HEK293 (cell line): ENCODE measurements at regions of chr9 and their contacts with region 1.

Region 1: DNA sequence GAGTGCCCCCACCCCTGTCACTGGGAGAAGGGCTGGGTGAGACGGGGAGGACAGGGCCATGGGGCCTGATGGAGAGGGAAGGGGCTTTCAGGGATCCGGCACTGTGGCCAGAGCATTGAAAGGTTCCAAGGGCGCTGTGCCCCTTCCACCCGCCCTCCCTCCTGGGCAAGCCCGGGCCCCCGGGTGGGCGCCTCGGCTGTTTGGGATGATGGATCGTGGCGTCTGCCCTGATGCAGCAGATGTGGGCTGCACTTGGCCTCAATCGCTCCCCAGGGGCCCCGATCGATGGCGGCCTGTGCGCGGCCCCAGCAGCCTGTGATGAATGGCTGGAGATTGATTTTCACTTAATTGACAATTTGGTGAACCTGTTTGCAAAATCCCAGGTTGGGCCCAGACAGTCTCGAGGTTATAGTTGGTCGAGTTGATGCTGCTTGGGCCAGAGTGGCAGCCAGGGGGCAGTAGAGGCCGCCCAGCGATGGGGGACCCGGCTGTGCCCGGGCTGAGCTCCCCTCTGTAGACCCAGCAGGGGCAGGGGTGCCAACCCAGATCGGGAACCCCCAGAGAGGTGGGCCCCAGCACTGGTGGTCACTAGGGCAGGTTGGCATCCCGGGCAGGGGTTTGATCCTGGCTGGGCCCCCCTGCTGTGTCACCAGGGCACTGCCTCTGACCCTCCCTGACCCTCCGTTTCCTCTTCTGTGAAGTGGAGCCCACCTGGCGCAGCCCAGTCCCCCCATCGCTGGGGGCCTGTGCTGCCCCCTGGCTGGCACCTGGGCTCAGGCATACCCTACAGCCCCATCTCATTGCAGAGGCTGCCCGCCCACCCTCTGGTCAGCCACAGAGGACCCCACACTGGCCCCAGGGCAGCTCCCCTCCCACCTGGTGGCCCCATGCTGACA is 34.7 kb downstream of the LHX3 start:
- H3K4me3 ChIP-seq: no peak overlapping the region
- H3K27ac ChIP-seq: no peak overlapping the region
- H3K4me1 ChIP-seq: peaks cover 4% of the 10 kb centered on the region; the same call in 1 of the 2 replicates
- CTCF ChIP-seq: peak; percentile 58

Region 2: GRCh38 chr9:136185596-136186366 is 15.5 kb after region 1 on chr9:
- CTCF ChIA-PET with region 1: interaction called, 10 read pairs
- POLR2A ChIA-PET with region 1: no interaction called
- H3K4me3 ChIP-seq: no peak overlapping the region
- H3K27ac ChIP-seq: no peak overlapping the region
- H3K4me1 ChIP-seq: 0 out of 2 replicates have a peak, but pooled peaks cover 2% of the 10 kb centered on the region
- CTCF ChIP-seq: no peak

Region 3: GRCh38 chr9:136204838-136205706 is 34.8 kb after region 1 on chr9 and contains the start of gene LHX3:
- CTCF ChIA-PET with region 1: interaction called, 12 read pairs
- POLR2A ChIA-PET with region 1: no interaction called
- H3K4me3 ChIP-seq: no peak within 1 kb of the TSS
- H3K27ac ChIP-seq: no peak within 1 kb of the TSS
- H3K4me1 ChIP-seq: no peaks in the 10 kb centered on the region
- CTCF ChIP-seq: no peak

Region 4: DNA sequence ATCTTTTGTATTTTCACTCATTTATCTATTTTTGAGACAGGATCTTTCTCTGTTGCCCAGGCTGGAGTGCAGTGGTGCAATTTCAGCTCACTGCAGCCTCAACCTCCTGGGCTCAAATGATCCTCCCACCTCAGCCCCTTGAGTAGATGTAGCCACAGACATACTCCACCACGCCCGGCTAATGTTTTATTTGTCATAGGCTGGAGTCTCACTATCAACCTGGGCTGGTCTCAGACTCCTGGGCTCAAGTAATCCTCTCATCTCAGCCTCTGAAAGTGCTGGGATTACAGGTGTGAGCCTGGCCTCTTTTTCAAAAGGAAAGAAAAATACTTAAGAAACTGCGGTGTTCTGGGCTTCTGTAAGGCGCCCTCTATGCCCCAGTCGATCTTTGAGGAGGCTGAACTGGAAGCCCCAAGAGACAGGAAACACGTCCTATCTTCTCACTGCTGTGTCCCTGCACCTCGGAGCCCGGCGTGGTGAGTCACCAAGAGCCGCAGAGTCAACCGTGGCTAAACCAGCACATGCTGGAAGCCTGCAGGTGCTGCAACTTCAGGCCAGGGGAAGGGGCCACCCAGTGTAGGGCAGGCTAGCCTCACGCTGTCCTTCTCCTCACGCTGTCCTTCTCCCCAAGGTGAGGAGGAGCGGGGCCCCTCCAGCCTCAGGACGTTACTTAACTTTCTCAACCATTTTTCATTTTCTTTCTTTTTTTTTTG is 49.9 kb after region 1 on chr9:
- CTCF ChIA-PET with region 1: interaction called, 39 read pairs
- POLR2A ChIA-PET with region 1: no interaction called
- H3K4me3 ChIP-seq: no peak overlapping the region
- H3K27ac ChIP-seq: no peak overlapping the region
- H3K4me1 ChIP-seq: no peaks in the 10 kb centered on the region
- CTCF ChIP-seq: no peak

Region 5: GRCh38 chr9:136225748-136226679 is 55.8 kb after region 1 on chr9:
- CTCF ChIA-PET with region 1: interaction called, 39 read pairs
- POLR2A ChIA-PET with region 1: no interaction called
- H3K4me3 ChIP-seq: no peak overlapping the region
- H3K27ac ChIP-seq: no peak overlapping the region
- H3K4me1 ChIP-seq: no peaks in the 10 kb centered on the region
- CTCF ChIP-seq: peak; percentile 96